ENCODE measurements at regions of chr11 and their contacts with region 1.

Region 1: GRCh38 chr11:61581030-61581928 is at the start of gene SYT7:
- DNase-seq: peak; percentile 97
- ATAC-seq: peak; percentile 91
- H3K4me3 Mint-ChIP-seq: peak within 1 kb of the TSS; percentile 64
- H3K27ac Mint-ChIP-seq: no peak within 1 kb of the TSS
- H3K4me1 Mint-ChIP-seq: peaks cover 12% of the 10 kb centered on the region
- H3K27me3 Mint-ChIP-seq: peaks cover 35% of the 10 kb centered on the region
- total RNA-seq, gene SYT7: 0.04 TPM in 1 of 2 experiments, not detected in the other

Region 2: DNA sequence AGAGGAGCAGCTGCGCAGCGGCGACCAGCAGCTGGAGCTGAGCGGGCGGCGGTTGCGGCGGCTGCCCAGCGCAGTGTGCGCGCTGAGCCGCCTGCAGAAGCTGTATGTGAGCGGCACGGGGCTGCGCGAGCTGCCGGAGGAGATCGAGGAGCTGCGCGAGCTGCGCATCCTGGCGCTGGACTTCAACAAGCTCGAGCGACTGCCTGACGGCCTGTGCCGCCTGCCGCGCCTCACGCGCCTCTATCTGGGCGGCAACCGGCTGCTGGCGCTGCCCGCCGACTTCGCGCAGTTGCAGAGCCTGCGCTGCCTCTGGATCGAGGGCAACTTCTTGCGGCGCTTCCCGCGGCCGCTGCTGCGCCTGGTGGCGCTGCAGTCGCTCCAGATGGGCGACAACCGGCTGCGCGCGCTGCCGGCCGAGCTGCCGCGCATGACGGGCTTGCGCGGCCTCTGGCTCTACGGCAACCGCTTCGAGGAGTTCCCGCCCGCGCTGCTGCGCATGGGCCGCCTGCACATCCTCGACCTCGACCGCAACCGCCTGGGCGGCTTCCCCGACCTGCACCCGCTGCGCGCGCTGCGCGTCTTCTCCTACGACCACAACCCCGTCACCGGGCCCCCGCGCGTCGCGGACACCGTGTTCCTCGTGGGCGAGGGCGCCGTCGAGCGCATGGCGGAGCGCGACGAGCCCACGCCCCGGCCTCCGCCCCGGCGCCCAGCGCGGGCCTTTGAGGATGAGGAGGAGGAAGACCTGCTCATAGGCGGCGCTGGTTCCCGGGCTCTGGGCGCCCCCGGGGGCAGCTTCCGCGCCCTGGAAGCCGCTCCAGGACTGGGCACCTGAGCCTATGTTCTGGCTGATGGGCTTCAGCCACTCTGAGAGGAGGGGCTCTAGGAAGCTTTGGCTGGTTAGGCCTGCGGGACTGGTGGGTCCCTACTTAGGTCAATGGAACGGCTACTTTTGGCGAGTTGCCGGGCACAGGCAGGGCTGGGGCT is 71.9 kb before region 1 on chr11:
- CTCF ChIA-PET with region 1: interaction called, 3 read pairs
- POLR2A ChIA-PET with region 1: no interaction called
- intact Hi-C with region 1: loop called in 1 of 2 experiments (anchors 1 kb)
- DNase-seq: peak; percentile 88
- ATAC-seq: peak; percentile 94
- H3K4me3 Mint-ChIP-seq: no peak overlapping the region
- H3K27ac Mint-ChIP-seq: no peak overlapping the region
- H3K4me1 Mint-ChIP-seq: peaks cover 6% of the 10 kb centered on the region
- H3K27me3 Mint-ChIP-seq: peaks cover 41% of the 10 kb centered on the region

Region 3: GRCh38 chr11:61539006-61539405 is 42.3 kb before region 1 on chr11:
- CTCF ChIA-PET with region 1: no interaction called
- POLR2A ChIA-PET with region 1: no interaction called
- intact Hi-C with region 1: no loop called
- DNase-seq: no peak
- ATAC-seq: no peak
- H3K4me3 Mint-ChIP-seq: no peak overlapping the region
- H3K27ac Mint-ChIP-seq: no peak overlapping the region
- H3K4me1 Mint-ChIP-seq: no peaks in the 10 kb centered on the region
- H3K27me3 Mint-ChIP-seq: peaks cover 7% of the 10 kb centered on the region

Region 4: DNA sequence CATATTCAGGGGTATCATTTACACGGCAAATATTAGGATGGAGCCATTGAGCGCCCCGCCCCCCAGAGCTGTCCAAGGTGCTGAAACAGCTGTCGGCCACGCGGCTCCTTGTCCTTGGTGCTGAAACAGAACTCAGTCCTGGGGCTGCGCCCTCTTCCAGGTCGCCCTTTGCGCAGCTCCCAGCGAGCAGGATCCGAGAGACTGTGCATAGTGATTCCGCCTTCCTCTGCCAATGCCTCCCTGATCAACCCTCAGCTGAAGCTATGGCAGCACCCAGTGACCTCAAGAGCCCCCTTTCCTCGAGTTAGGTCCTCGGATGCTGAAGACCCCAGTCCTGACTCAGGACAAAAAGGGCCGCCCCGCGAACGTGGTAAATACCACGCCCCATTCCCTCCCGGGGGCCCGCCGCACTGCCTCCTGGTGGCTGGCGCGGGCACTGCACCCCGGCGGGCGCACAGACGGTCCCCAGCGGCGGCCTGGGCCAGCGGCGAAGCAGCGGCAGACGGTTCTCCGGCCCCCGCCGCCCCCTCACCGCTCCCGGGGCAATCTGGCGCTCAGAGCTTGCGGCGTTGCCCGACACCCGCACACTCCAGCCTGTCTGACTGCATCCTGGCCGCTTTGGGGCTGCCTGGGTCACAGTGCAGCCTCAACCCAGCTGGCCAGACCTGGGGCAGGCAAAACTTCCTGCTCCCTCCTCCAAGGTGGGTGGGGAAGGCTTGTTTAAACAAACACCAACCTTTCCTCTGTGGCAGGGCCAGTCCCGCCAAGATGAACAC is 13.8 kb before region 1 on chr11:
- CTCF ChIA-PET with region 1: interaction called, 8 read pairs
- POLR2A ChIA-PET with region 1: no interaction called
- intact Hi-C with region 1: loop called in 1 of 2 experiments (anchors 1 kb)
- DNase-seq: peak; percentile 86
- ATAC-seq: peak; percentile 91
- H3K4me3 Mint-ChIP-seq: no peak overlapping the region
- H3K27ac Mint-ChIP-seq: no peak overlapping the region
- H3K4me1 Mint-ChIP-seq: no peaks in the 10 kb centered on the region
- H3K27me3 Mint-ChIP-seq: peaks cover 37% of the 10 kb centered on the region

Region 5: DNA sequence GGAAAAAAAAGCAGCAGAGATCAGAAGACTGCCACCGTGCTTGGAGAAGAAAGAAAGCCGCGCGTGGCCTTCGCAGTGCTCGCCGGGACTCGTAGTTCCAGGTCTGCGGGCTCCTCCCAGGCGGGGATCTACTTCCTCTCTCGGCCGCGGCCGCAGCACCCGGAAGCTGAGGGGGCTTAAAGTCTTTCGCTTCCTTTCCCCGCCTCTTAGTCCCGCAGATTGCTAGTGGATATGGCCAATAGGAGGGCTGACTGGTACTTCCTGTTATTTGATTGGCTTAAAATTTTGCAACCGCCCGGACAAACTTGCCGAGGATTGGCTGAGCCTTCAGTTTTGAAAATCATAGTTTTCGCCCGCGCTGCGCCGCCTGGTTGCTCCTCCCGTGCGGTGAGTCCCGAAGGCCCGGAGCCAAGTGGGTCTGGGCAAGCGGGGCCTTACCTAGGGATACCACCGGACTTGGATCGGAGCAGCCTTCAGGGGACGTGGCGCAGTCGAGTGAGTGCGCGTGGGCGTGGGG is 542.4 kb after region 1 on chr11 and contains the start of gene INCENP:
- CTCF ChIA-PET with region 1: interaction called, 3 read pairs
- POLR2A ChIA-PET with region 1: no interaction called
- intact Hi-C with region 1: loop called in 1 of 2 experiments (anchors 10 kb)
- DNase-seq: peak; percentile 97
- ATAC-seq: peak; percentile 98
- H3K4me3 Mint-ChIP-seq: peak within 1 kb of the TSS; percentile 98
- H3K27ac Mint-ChIP-seq: peak within 1 kb of the TSS; percentile 90
- H3K4me1 Mint-ChIP-seq: peaks cover 29% of the 10 kb centered on the region
- H3K27me3 Mint-ChIP-seq: no peaks in the 10 kb centered on the region
- total RNA-seq, gene INCENP: 125 to 140 TPM